Posterior vena cava (tissue), 2 donors: ENCODE measurements at regions of chr2 and their contacts with region 1.

Region 1: DNA sequence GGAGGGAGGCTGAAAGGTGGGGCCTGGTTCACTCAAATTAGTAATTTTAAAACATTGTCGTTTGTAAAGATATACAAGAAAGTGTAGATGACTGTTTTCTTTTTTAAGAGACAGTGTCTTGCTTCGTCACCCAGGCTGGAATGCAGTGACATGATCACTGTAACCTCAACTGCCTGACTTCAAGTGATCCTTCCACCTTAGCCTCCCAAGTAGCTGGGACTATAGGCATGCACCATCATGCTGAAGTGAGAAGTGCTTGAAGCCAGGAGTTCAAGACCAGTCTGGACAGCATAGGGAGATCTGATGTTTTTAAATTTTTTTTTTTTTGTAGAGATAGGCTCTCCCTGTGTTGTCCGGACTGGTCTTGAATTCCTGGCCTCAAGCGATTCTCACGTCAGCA is 52.8 kb downstream of the HNRNPLL start:
- DNase-seq: no peak

Region 2: GRCh38 chr2:36812196-36812595 is 1737.7 kb before region 1 on chr2:
- intact Hi-C with region 1: no loop called
- DNase-seq: no peak

Region 3: GRCh38 chr2:37832590-37833197 is 717.2 kb before region 1 on chr2:
- intact Hi-C with region 1: no loop called
- DNase-seq: peak; percentile 95

Region 4: DNA sequence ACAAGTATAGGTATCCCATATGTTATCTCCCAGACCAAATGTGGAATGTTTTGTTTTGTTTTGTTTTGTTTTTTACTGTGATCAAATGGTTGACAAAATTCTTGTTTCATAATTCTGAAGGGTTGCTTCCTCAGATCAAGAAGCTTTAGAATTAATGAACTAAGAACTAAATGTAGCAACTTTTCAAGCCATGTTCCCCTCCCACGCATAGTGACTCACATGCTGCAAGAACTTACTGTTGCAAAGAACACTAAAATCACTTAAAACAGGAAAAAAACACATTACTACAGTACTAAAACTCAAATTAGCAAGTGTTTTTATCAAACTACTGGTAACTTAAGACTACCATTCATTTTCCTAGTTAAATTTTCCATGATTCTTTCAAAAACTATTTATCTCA is 22.3 kb after region 1 on chr2:
- intact Hi-C with region 1: loop called in 1 of 2 experiments (anchors 1 kb)
- DNase-seq: no peak